HepG2 (cell line): ENCODE measurements at regions of chr18 and their contacts with region 1.

Region 1: GRCh38 chr18:23131693-23132319 is 3.5 kb upstream of the CABLES1 start:
- DNase-seq: peak; percentile 75
- ATAC-seq: no peak
- H3K4me3 ChIP-seq: no peak overlapping the region
- H3K27ac ChIP-seq: no peak overlapping the region
- H3K4me1 ChIP-seq: peaks cover 50% of the 10 kb centered on the region
- H3K27me3 ChIP-seq: no peaks in the 10 kb centered on the region; a peak in 1 of 5 replicates
- CTCF ChIP-seq: peak; percentile 82
- EP300 ChIP-seq: no peak
- POLR2A ChIP-seq: no peak
- RAD21 ChIP-seq: peak; percentile 54

Region 2: DNA sequence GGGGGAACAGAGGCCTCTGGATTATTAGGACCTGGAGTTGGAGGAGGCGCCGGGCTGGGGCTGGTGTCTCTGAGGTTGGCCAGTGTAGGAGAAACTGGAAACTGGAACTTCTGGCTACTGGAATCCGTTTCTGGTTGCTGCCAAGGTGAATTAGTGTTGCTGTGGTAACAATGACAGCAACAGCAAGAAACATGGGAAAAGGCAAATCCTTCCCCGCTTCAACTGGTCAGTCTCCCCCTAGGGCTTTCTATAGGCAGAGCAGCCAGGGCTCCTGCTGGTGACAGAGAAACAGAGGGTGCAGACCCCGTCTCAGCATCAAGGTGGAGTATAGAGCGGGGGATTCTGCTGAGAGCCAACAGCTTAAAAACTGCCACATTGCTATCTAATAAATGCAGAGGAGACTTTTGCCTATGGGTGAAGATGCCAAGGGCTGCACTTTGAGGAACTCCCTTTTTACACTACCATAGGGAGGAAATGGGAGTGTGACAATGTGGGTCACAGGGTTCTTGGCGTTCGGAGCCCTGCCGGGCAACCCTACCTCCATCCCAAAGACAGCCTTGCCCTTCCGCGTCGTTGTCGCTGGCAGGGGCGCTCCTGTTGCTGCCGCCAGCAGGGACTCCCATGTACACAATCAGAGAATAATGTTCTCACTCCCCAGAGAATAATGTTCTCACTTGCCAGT is 77.9 kb before region 1 on chr18:
- CTCF ChIA-PET with region 1: no interaction called
- POLR2A ChIA-PET with region 1: no interaction called
- in situ Hi-C with region 1: no loop called
- intact Hi-C with region 1: no loop called
- DNase-seq: peak; percentile 50
- ATAC-seq: peak; percentile 98
- H3K4me3 ChIP-seq: no peak overlapping the region
- H3K27ac ChIP-seq: no peak overlapping the region
- H3K4me1 ChIP-seq: no peaks in the 10 kb centered on the region
- H3K27me3 ChIP-seq: peaks cover 2 to 3% of the 10 kb centered on the region in 2 experiments; a peak in 1 of 5 replicates
- CTCF ChIP-seq: peak; percentile 30
- EP300 ChIP-seq: no peak
- POLR2A ChIP-seq: no peak
- RAD21 ChIP-seq: no peak

Region 3: GRCh38 chr18:23077493-23078256 is 54.1 kb before region 1 on chr18:
- CTCF ChIA-PET with region 1: no interaction called
- POLR2A ChIA-PET with region 1: interaction called, 3 read pairs
- in situ Hi-C with region 1: no loop called
- intact Hi-C with region 1: loop called (anchors 2 kb)
- DNase-seq: peak; percentile 75
- ATAC-seq: peak; percentile 95
- H3K4me3 ChIP-seq: peak overlapping the region in 1 of 3 experiments; percentile 36; a peak in 1 of 6 replicates
- H3K27ac ChIP-seq: no peak overlapping the region
- H3K4me1 ChIP-seq: peaks cover 28% of the 10 kb centered on the region
- H3K27me3 ChIP-seq: 0 out of 5 replicates have a peak, but pooled peaks cover 0 to 2% of the 10 kb centered on the region in 2 experiments
- CTCF ChIP-seq: peak; percentile 83
- EP300 ChIP-seq: no peak; a peak in 1 of 4 replicates
- POLR2A ChIP-seq: no peak
- RAD21 ChIP-seq: peak; percentile 81

Region 4: DNA sequence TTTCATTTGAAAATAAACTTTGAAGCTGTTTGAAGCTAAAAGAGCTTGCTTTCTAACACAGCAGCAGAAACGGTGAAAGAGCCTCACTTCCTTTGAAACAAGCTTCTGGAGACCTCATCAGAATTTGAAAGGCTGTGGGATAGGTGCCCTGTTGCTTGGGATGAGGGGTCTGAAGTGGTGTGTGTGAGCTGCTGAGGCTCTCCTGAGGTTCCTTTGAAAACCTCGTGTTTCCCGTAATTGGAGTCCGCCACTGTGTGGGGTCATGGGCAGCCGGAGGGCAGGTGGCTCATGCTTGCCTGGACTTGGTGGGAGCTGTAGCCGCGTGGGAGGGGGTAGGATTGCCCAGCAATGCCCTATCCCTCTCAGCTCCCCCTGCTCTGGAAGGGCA is 37.8 kb after region 1 on chr18:
- CTCF ChIA-PET with region 1: no interaction called
- POLR2A ChIA-PET with region 1: no interaction called
- in situ Hi-C with region 1: no loop called
- intact Hi-C with region 1: no loop called
- DNase-seq: no peak
- ATAC-seq: no peak
- H3K4me3 ChIP-seq: no peak overlapping the region
- H3K27ac ChIP-seq: no peak overlapping the region
- H3K4me1 ChIP-seq: no peaks in the 10 kb centered on the region
- H3K27me3 ChIP-seq: no peaks in the 10 kb centered on the region
- CTCF ChIP-seq: no peak
- EP300 ChIP-seq: no peak
- POLR2A ChIP-seq: no peak
- RAD21 ChIP-seq: no peak

Region 5: DNA sequence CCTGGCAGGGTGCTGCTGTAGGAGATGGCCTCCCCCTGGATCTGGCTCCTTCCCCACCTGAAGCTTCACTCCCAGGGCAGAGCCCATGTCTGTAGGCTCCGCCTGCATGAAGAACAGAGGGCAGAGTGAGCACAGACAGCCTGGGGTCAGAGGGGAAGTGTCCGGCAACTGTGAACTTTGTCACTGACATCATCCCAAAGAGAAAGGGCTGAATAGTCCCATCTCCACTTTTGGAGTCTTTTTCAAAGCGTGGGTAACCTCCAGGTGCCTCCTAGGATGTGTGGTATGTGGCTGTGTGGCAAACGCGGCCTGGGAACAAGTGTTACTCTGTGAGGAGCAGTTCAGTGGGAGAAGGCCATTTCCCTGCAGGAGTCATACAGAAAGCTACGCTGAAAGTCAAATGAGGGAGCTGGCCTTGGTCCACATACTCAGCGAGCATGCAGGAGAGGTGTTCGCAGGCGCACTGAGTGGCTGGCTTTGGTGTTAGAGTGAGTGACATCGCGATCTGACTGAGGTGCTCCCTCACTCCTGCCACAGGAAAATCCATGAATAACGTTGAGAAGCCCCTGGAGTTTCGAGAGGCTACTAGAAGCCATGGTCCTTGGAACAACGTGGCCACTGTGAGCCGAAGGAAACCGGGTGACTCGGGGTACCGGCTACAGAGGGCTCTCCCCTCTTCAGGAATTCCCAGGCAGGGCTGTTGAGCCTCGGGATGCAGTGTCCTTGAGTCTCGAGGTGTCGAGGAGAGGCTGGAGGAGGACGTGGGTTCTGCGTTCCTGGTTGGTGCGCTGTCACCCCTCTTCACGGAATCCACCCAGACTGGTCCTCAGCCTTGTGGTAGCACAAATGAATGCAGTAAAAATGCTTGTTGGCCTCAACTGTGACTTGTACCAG is 58.2 kb after region 1 on chr18:
- CTCF ChIA-PET with region 1: no interaction called
- POLR2A ChIA-PET with region 1: interaction called, 4 read pairs
- in situ Hi-C with region 1: no loop called
- intact Hi-C with region 1: loop called (anchors 5 kb)
- DNase-seq: peak; percentile 35
- ATAC-seq: peak; percentile 85
- H3K4me3 ChIP-seq: no peak overlapping the region
- H3K27ac ChIP-seq: peak overlapping the region; percentile 27
- H3K4me1 ChIP-seq: peaks cover 30% of the 10 kb centered on the region
- H3K27me3 ChIP-seq: no peaks in the 10 kb centered on the region
- CTCF ChIP-seq: no peak
- EP300 ChIP-seq: no peak
- POLR2A ChIP-seq: no peak
- RAD21 ChIP-seq: no peak

Region 6: DNA sequence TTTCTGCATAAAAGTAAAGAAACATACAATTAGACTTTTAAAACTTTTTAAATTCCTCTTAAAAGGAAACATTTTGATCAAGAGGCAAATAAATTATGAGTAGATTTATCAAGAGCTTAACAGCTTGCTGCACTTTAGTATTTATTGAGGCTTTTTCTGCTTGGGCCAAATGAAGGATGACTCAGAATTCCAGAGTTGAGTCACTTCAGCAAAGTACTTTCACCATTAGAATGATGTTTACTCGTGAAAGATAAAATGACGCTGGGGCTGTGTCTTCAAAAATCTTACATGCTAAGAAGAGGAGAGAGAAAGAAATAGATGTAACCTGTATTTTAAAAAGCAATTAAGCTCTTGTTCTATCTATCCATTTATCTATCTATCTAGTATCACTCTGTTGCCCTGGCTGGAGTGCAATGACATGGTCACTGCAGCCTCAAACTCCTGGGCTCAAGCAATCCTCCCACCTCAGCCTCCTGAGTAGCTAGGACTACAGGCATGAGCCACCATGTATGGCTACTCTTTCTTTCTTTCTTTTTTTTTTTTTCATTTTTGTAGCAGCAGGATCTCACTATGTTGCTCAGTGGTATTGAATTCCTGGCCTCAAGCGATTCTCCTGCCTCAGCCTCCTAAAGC is 246.0 kb after region 1 on chr18:
- CTCF ChIA-PET with region 1: interaction called, 9 read pairs
- POLR2A ChIA-PET with region 1: interaction called, 7 read pairs
- in situ Hi-C with region 1: loop called (anchors 10 kb)
- intact Hi-C with region 1: loop called (anchors 1 kb)
- DNase-seq: peak; percentile 60
- ATAC-seq: no peak; the same call in 2 of the 3 replicates
- H3K4me3 ChIP-seq: no peak overlapping the region
- H3K27ac ChIP-seq: no peak overlapping the region
- H3K4me1 ChIP-seq: peaks cover 33% of the 10 kb centered on the region
- H3K27me3 ChIP-seq: no peaks in the 10 kb centered on the region
- CTCF ChIP-seq: no peak
- EP300 ChIP-seq: no peak
- POLR2A ChIP-seq: no peak
- RAD21 ChIP-seq: no peak

Region 7: GRCh38 chr18:23412351-23412964 is 280.7 kb after region 1 on chr18:
- CTCF ChIA-PET with region 1: interaction called, 11 read pairs
- POLR2A ChIA-PET with region 1: interaction called, 5 read pairs
- in situ Hi-C with region 1: no loop called
- intact Hi-C with region 1: loop called (anchors 2 kb)
- DNase-seq: no peak
- ATAC-seq: no peak
- H3K4me3 ChIP-seq: no peak overlapping the region
- H3K27ac ChIP-seq: no peak overlapping the region
- H3K4me1 ChIP-seq: peaks cover 9% of the 10 kb centered on the region
- H3K27me3 ChIP-seq: no peaks in the 10 kb centered on the region
- CTCF ChIP-seq: no peak
- EP300 ChIP-seq: no peak
- POLR2A ChIP-seq: no peak
- RAD21 ChIP-seq: no peak

Region 8: GRCh38 chr18:23487738-23488570 is 356.1 kb after region 1 on chr18:
- CTCF ChIA-PET with region 1: no interaction called
- POLR2A ChIA-PET with region 1: no interaction called
- in situ Hi-C with region 1: no loop called
- intact Hi-C with region 1: no loop called
- DNase-seq: peak; percentile 60
- ATAC-seq: peak; percentile 93
- H3K4me3 ChIP-seq: peak overlapping the region; percentile 22 to 48 (median 37); a peak in 5 of 6 replicates
- H3K27ac ChIP-seq: peak overlapping the region; percentile 71
- H3K4me1 ChIP-seq: peaks cover 26% of the 10 kb centered on the region
- H3K27me3 ChIP-seq: no peaks in the 10 kb centered on the region
- CTCF ChIP-seq: peak; percentile 13; the same call in 1 of the 2 replicates
- EP300 ChIP-seq: peak in 1 of 2 experiments; percentile 3; a peak in 1 of 4 replicates
- POLR2A ChIP-seq: 0 out of 4 replicates have a peak, but pooled peaks have one; percentile 7 to 22
- RAD21 ChIP-seq: no peak